Posterior vena cava (tissue), 2 donors: ENCODE measurements at regions of chr2 and their contacts with region 1.

Region 1: DNA sequence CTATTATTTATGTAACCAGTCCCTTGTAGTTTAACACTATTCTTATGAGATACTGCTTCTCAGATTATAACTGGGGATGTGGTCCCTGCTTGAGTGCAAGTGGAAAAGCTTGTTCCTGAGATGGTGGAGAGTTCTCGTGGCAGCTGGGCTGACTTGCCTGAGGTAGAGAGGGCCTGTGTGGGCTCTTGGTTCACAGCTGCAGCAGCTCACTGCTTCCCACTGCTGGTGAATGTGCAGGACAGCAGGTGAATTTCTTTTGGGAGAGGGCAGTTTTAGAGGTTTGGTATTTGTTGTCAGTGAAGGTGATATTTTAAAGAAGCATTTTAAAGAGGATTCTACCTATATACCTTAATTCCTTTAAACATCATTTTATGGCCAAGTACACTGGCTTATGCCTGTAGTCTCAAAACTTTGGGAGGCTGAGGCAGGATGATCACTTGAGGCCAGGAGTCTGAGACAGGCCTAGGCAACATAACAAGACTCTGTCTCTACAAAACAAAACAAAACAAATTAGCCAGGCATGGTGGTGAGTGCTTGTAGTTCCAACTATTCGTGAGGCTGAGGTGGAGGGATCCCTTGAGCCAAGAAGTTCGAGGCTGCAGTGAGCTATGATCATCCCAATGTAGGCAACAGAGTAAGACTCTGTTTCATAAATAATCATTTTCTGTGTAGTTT is 94.8 kb downstream of the MTA3 start:
- DNase-seq: no peak

Region 2: DNA sequence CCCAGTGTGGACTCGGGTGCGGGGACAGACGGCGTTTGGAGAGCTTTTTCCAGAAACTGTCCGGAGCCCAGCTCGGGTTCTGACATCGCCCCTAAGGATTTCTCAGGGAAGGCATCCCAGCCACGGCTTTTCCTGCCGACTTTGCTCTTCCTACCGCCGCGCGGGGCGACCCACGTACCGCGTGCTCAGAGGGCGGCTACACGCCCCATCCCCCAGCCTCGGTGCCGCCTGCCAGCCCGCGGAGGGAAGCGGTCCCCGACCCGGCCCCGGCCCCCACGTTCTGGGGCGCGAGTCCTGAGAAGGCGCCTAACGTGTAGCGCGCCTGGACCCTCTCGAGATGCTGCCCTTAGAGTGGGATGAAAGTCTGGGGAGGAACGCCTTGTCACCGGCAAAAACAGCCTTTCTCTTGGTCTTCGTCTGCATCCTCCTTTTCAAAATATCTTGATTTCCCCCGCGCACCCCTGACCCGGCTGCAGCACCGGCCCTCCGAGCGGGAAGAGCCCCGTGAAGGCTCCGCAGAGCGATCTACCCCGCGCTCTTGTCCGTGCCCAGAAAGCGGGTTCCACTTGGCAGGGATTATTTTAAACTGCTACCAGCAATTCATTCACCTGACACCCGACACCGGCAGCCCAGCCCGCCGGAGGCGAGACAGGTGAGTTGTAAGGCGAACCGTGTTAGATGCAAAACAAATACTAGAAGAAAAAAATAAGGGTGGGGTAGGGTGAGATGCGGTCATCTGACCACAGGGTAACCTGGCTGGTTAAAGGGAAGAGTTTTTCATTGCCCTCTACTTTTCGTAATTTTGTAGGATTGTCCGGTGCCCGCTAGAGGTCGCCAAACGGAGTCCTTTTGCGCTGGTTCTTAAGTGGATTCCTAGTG is 168.6 kb before region 1 on chr2:
- intact Hi-C with region 1: loop called in 1 of 2 experiments (anchors 5 kb)
- DNase-seq: peak; percentile 88

Region 3: DNA sequence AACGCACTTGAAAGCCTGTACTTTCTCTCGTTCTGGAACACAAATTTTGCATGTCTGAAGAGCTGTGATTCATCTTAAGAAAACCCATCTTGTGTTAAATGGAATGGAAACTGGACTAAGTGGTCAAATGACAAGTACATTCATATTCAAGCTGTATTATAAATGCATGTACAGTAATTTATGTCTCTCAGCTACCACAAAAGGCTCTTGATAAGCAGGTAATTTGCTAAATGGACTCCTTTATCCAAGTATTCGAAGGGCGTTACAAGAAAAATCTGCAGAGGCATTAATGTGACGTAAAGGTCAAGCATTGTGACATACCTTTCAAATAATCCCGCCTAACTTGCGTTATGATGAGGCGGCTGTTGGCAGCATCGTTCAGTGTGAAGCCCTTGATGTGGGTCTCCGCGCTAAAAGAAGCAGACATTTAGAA is 1242.1 kb after region 1 on chr2:
- intact Hi-C with region 1: loop called in 1 of 2 experiments (anchors 10 kb)
- DNase-seq: no peak